PC-3 (cell line): ENCODE measurements at regions of chr4 and their contacts with region 1.

Region 1: DNA sequence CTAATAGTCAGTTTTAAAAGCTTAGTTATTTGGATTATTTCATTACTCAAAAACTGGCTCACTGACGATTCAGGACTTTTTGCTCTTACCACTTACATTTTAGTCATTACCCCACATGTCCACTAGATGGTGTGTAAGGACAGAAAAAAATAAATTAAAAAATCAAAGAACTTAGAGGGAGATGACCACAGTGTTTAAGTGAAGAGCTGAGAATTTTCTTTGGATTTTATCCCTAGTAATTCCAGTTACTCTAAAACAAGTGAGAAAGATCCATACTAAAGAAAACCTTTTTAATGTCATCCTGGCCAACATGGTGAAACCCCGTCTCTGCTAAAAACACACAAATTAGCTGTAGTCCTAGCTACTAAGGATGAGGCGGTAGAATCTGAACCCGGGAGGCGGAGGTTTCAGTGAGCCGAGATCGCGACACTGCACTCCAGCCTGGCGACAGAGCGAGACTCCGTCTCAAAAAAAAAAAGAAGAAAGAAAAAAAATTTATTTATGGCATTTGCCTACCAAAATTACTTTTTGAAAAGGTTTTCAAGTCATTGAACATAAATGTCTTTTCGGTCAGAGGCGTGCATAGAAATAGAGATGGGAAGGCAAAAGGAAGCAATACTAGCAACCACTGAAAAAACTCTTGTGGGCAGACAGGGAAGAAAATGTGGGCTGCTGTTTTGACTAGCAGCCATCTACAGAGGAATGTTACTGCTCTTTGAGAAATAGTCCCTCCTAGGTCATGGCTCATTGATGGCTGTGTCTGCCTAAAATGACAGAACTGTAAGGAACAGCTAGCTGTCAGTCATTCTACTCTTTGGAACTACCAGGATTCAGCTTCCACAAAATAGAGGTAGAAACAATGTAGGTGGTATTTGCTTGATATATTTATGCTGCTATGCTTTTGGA is 26.6 kb upstream of the TMPRSS11B start:
- DNase-seq: peak; percentile 81
- ATAC-seq: peak; percentile 72
- H3K4me3 ChIP-seq: peak overlapping the region; percentile 59
- H3K27ac ChIP-seq: no peak overlapping the region
- H3K4me1 ChIP-seq: peaks cover 20% of the 10 kb centered on the region
- H3K27me3 ChIP-seq: no peaks in the 10 kb centered on the region
- CTCF ChIP-seq: peak; percentile 89

Region 2: DNA sequence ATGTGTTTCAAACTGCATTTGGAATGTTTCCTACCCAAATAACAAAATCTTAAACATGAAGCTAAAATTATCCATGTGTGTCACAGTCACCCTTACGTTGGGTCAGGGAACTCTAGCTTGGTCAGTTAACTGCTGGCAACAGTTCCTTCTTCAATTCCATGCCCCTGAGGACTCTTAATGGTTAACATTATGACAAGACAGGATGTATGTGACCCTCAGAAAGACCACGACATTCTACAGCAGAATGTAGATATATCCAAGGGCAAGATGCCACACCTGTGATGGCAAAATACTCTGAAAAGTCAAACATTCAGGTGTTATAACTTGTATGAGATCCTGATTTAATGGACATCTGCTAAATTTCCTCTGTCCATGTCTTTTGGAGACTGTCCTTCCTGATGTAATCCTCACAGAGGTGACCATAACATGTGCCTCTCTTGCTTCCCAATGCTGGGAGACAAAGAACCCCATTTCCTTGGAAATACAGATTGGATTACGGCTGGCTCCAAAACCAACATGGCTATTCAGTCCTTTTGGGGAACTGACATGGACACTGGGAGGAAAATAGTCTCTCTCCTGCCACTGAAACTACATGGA is 38.6 kb after region 1 on chr4:
- CTCF ChIA-PET with region 1: no interaction called
- POLR2A ChIA-PET with region 1: no interaction called
- intact Hi-C with region 1: loop called (anchors 5 kb)
- DNase-seq: no peak
- ATAC-seq: no peak
- H3K4me3 ChIP-seq: no peak overlapping the region
- H3K27ac ChIP-seq: no peak overlapping the region
- H3K4me1 ChIP-seq: no peaks in the 10 kb centered on the region
- H3K27me3 ChIP-seq: no peaks in the 10 kb centered on the region
- CTCF ChIP-seq: no peak

Region 3: DNA sequence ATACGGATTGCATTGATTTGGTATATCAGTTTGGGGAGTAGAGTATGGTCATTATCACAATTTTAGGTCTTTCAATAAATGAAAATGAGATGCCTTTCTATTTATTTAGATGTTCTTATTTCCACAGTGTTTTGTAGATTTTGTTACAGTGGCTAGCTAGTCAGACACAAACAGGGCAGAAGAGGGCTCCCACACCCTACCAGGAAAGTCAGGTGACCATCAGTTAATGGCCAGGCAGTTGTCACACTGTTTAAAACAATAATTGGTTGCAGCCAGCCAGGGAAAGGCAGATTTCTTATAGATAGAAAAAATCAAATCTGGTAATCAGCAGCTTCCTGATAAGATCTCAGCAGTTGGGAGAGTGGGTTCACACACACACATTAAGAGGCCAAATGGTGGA is 246.8 kb after region 1 on chr4:
- CTCF ChIA-PET with region 1: no interaction called
- POLR2A ChIA-PET with region 1: no interaction called
- intact Hi-C with region 1: no loop called
- DNase-seq: no peak
- ATAC-seq: no peak
- H3K4me3 ChIP-seq: no peak overlapping the region
- H3K27ac ChIP-seq: no peak overlapping the region
- H3K4me1 ChIP-seq: no peaks in the 10 kb centered on the region
- H3K27me3 ChIP-seq: no peaks in the 10 kb centered on the region
- CTCF ChIP-seq: 0 out of 2 replicates have a peak, but pooled peaks have one; percentile 21

Region 4: GRCh38 chr4:69617083-69617694 is 1345.1 kb after region 1 on chr4:
- CTCF ChIA-PET with region 1: no interaction called
- POLR2A ChIA-PET with region 1: no interaction called
- intact Hi-C with region 1: loop called (anchors 1 kb)
- DNase-seq: peak; percentile 76
- ATAC-seq: peak; percentile 51
- H3K4me3 ChIP-seq: no peak overlapping the region
- H3K27ac ChIP-seq: no peak overlapping the region
- H3K4me1 ChIP-seq: no peaks in the 10 kb centered on the region
- H3K27me3 ChIP-seq: peaks cover 11% of the 10 kb centered on the region; the same call in 1 of the 2 replicates
- CTCF ChIP-seq: peak; percentile 83